HCT116 (cell line): ENCODE measurements at regions of chr12 and their contacts with region 1.

Region 1: DNA sequence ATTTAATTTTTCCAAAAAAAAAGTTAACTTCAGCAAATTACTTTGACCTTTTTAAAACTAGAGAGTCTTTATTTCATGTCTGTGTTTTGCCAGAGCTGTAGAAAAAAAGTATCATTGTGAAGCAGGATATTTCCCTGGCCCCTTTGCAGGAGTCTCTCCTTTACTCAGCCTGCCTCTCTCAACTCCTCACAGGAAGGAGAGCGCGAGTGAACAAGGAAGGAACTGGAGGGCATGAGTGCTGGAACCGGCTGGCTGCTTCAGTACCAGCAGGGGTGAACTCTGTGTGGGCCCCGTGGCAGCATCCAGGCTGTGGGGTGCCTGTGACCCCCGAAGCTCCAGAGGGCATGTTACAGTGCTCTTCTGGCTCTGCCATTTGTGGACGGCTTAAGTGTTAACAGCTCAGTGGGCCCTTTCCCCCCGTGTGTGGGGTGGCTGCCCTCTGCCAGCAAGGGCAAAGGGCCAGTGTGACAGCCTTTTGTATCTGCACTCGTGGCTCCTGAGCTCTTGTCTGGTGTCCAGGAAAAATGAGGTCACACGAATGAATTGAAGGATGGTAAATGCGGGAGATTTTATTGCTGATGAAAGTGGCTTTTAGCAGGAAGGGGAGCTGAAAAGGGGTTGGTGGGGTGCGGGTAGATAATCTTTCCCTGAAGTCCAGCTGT is 76.6 kb upstream of the KCNH3 start:
- DNase-seq: no peak
- ATAC-seq: no peak
- H3K4me3 ChIP-seq: no peak overlapping the region
- H3K27ac ChIP-seq: no peak overlapping the region
- H3K4me1 ChIP-seq: no peaks in the 10 kb centered on the region
- H3K27me3 ChIP-seq: no peaks in the 10 kb centered on the region
- CTCF ChIP-seq: no peak
- POLR2A ChIP-seq: no peak
- RAD21 ChIP-seq: no peak

Region 2: DNA sequence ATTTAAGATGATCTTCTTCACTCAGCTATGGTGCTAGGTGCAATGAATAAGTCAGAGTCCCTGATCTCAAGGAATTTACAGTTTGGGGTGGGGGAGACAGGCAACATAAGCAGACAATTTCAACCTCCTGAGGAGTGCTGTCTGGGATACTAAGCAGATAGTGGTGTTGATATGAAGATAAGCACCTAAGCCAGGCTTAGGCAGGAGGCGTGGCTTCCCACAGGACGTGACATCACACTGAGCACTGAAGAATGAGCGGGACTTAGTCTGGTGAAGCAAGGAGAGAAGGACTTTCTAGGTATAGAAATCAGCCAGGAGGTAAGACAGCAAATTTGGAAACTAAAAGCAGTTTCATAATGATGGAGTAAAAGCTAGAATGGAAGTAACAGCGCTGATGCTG is 160.5 kb before region 1 on chr12:
- CTCF ChIA-PET with region 1: no interaction called
- POLR2A ChIA-PET with region 1: no interaction called
- RAD21 ChIA-PET with region 1: no interaction called
- intact Hi-C with region 1: no loop called
- DNase-seq: no peak
- ATAC-seq: no peak
- H3K4me3 ChIP-seq: no peak overlapping the region
- H3K27ac ChIP-seq: no peak overlapping the region
- H3K4me1 ChIP-seq: peaks cover 9 to 25% of the 10 kb centered on the region in 2 experiments; a peak in 3 of 4 replicates
- H3K27me3 ChIP-seq: no peaks in the 10 kb centered on the region
- CTCF ChIP-seq: no peak
- POLR2A ChIP-seq: no peak
- RAD21 ChIP-seq: no peak

Region 3: GRCh38 chr12:49388682-49389386 is 73.4 kb before region 1 on chr12:
- CTCF ChIA-PET with region 1: no interaction called
- POLR2A ChIA-PET with region 1: no interaction called
- RAD21 ChIA-PET with region 1: no interaction called
- intact Hi-C with region 1: loop called (anchors 5 kb)
- DNase-seq: no peak
- ATAC-seq: no peak
- H3K4me3 ChIP-seq: no peak overlapping the region
- H3K27ac ChIP-seq: no peak overlapping the region
- H3K4me1 ChIP-seq: peaks cover 5 to 7% of the 10 kb centered on the region in 2 experiments; a peak in 3 of 4 replicates
- H3K27me3 ChIP-seq: no peaks in the 10 kb centered on the region
- CTCF ChIP-seq: no peak
- POLR2A ChIP-seq: no peak
- RAD21 ChIP-seq: no peak

Region 4: DNA sequence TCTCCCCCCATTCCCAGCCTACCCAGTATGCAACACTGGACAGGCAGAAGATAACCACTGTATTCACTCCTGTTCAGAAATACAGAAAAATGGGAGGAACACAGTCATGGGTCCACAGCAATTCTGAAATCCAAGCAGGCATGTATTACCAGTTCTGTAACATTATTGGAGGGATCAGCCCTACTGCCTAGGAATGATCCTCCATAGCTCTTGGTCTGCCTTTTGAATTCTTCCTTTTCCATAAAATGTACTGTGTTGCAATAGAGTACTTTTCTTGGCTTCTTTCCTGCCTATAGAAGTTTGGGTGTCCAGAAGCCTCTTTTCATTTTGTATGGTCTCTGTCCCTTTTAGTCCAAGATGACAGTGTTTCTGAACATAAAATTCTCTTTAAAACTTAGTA is 48.4 kb before region 1 on chr12:
- CTCF ChIA-PET with region 1: no interaction called
- POLR2A ChIA-PET with region 1: no interaction called
- RAD21 ChIA-PET with region 1: no interaction called
- intact Hi-C with region 1: no loop called
- DNase-seq: no peak
- ATAC-seq: no peak
- H3K4me3 ChIP-seq: no peak overlapping the region
- H3K27ac ChIP-seq: no peak overlapping the region
- H3K4me1 ChIP-seq: peaks cover 34% of the 10 kb centered on the region in 2 experiments
- H3K27me3 ChIP-seq: no peaks in the 10 kb centered on the region
- CTCF ChIP-seq: no peak
- POLR2A ChIP-seq: no peak
- RAD21 ChIP-seq: no peak